ENCODE measurements at regions of chr1 and their contacts with region 1.

Region 1: DNA sequence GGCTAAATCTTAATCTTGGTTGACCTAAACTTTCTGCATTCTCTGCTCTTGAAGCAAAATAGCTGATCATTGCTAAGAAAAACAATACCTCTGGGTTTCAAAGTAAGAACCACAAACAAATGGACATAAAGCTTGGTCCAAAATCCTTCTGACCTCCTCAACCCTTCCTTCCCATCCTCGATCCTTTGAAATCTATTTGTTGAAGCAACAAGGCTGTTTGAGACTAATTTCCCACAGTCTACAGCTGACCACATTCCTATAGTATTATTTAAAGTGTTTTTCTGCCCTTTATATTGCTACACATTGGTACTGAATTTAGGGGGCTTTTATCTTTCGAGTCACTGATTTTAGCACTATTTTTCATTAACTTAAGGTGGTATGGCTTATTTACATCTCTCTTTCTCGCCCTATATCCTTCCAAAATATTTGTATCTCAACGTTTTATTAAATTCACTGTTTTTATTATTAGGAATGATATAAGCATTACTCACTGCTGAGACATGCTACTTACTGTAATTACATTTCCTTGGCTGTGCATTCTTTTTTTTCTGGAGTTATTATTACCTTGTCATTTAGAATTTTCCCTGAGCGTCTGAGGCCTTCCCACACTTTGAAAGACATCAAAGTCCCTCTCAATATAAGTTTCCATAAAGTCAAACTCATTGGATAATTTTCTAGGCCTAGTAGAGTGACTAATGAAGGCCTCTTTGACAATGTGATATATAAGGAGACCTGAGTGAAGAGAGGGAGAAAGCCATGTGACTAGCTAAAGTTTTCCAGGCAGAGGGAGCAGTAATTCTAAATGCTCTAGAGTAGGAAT is 73.9 kb downstream of the RAB3GAP2 start:
- DNase-seq: no peak
- ATAC-seq: no peak
- H3K4me3 Mint-ChIP-seq: no peak overlapping the region
- H3K27ac Mint-ChIP-seq: no peak overlapping the region
- H3K4me1 Mint-ChIP-seq: no peaks in the 10 kb centered on the region
- H3K27me3 Mint-ChIP-seq: no peaks in the 10 kb centered on the region
- CTCF ChIP-seq: no peak

Region 2: DNA sequence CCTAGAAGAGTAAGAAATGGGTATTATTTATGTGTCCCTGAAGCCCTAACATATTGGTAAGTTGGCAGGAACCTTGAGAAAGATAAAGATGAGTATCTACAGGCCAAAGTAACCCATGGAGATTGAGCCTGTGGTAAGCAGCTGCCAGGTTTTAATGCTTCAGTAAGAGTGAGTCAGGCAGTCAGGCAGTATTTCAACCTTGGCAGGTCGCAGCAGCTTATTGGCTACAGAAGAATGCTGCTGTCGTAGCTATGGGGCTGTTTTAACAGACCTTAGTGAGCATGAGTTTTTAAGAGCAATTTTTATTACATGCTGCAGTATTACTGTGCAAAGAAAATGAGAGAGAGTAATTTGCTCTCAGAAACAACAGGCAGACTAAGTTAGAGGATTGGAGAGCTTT is 259.7 kb before region 1 on chr1:
- CTCF ChIA-PET with region 1: no interaction called
- POLR2A ChIA-PET with region 1: no interaction called
- intact Hi-C with region 1: no loop called
- DNase-seq: no peak
- ATAC-seq: no peak
- H3K4me3 Mint-ChIP-seq: no peak overlapping the region
- H3K27ac Mint-ChIP-seq: no peak overlapping the region
- H3K4me1 Mint-ChIP-seq: peaks cover 7% of the 10 kb centered on the region
- H3K27me3 Mint-ChIP-seq: peaks cover 60% of the 10 kb centered on the region
- CTCF ChIP-seq: no peak

Region 3: GRCh38 chr1:220164116-220164515 is 34.3 kb before region 1 on chr1:
- CTCF ChIA-PET with region 1: no interaction called
- POLR2A ChIA-PET with region 1: no interaction called
- intact Hi-C with region 1: loop called (anchors 5 kb)
- DNase-seq: no peak
- ATAC-seq: no peak
- H3K4me3 Mint-ChIP-seq: no peak overlapping the region
- H3K27ac Mint-ChIP-seq: no peak overlapping the region
- H3K4me1 Mint-ChIP-seq: no peaks in the 10 kb centered on the region
- H3K27me3 Mint-ChIP-seq: no peaks in the 10 kb centered on the region
- CTCF ChIP-seq: no peak

Region 4: GRCh38 chr1:220300442-220301121 is 102.2 kb after region 1 on chr1:
- CTCF ChIA-PET with region 1: no interaction called
- POLR2A ChIA-PET with region 1: no interaction called
- intact Hi-C with region 1: no loop called
- DNase-seq: no peak
- ATAC-seq: no peak
- H3K4me3 Mint-ChIP-seq: no peak overlapping the region
- H3K27ac Mint-ChIP-seq: no peak overlapping the region
- H3K4me1 Mint-ChIP-seq: no peaks in the 10 kb centered on the region
- H3K27me3 Mint-ChIP-seq: peaks cover 13% of the 10 kb centered on the region
- CTCF ChIP-seq: no peak

Measured in activated B cell treated with CpG ODN at 0.5 μM for 24 hours (primary cell).